ENCODE measurements at regions of chr5 and their contacts with region 1.

Region 1: GRCh38 chr5:135944967-135945560 is 9.7 kb downstream of the LECT2 start:
- DNase-seq: peak; percentile 73
- H3K4me3 ChIP-seq: no peak overlapping the region
- H3K27ac ChIP-seq: no peak overlapping the region
- H3K4me1 ChIP-seq: no peaks in the 10 kb centered on the region
- H3K27me3 ChIP-seq: no peaks in the 10 kb centered on the region
- CTCF ChIP-seq: peak; percentile 58 to 82 (median 80)
- POLR2A ChIP-seq: no peak

Region 2: GRCh38 chr5:135851186-135851914 is 93.7 kb before region 1 on chr5:
- intact Hi-C with region 1: no loop called
- DNase-seq: no peak
- H3K4me3 ChIP-seq: no peak overlapping the region
- H3K27ac ChIP-seq: no peak overlapping the region
- H3K4me1 ChIP-seq: no peaks in the 10 kb centered on the region
- H3K27me3 ChIP-seq: no peaks in the 10 kb centered on the region
- CTCF ChIP-seq: no peak
- POLR2A ChIP-seq: no peak

Region 3: DNA sequence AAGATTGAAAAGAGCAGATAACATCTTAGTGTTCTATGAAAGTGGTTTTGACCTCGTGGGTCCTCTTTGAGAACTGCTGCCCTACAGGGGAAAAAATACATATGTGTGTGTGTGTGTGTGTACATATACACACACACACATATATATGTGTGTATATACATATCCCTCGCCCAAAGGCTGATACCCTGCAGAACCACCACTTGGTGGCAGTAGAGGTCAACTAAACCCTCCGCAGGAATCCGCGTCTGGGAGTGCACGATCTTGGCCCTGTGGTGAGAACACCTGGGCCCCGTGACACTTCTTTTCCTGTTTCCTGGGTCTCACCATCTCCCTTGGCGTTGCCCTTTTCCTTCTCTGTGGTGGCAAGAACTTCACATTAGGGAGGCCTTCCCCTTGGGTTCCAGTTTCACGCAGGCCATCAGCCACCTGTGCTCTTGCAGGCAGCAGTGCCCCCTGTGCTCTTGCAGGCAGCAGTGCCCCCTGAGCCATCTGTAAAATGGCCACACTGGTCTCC is 57.7 kb before region 1 on chr5:
- intact Hi-C with region 1: loop called (anchors 5 kb)
- DNase-seq: peak; percentile 63
- H3K4me3 ChIP-seq: no peak overlapping the region
- H3K27ac ChIP-seq: no peak overlapping the region
- H3K4me1 ChIP-seq: no peaks in the 10 kb centered on the region
- H3K27me3 ChIP-seq: no peaks in the 10 kb centered on the region
- CTCF ChIP-seq: peak; percentile 57 to 84 (median 77)
- POLR2A ChIP-seq: no peak

Region 4: DNA sequence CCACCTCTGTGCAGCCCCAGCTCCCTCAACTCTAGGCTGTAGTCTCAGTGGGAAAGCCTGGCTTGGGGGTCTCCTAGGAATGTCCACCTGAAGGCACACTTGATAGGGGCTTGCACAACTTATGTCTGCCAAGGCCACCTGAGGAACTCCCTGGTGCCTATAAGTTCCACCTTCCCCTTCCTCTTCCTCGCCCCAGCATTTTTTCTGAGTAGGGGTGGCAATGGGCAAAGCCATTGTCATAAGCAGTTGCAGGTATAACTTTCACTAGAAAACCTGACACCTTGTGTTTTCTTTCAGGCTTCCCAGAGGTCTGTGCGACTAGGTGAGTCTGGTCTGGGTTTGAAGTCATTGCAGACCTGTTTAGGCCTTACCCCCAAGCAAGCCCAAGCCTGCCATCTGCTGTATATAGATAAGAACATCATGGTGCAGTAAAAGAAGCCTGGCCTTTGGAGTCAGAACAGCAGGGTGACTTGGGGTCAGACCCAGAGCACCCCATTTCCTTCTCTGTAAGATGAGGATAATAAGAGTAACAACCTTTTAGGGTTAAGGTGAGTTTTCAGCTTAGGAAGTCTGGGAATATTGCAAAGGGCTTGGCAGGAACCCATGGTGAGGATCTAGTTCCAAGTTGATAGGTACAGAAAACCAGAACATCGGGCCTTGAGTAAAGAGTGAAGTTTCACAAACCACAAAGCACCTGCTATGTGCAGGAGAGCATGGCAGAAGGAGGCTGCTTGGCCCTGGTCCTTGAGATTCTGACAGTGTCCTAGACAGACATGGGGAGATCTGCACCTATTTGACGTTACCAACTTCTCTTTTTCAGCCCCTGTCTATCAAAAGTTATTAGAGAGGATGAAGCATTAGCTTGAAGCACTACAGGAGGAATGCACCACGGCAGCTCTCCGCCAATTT is 117.6 kb after region 1 on chr5:
- intact Hi-C with region 1: loop called (anchors 2 kb)
- DNase-seq: no peak
- H3K4me3 ChIP-seq: no peak overlapping the region
- H3K27ac ChIP-seq: no peak overlapping the region
- H3K4me1 ChIP-seq: no peaks in the 10 kb centered on the region
- H3K27me3 ChIP-seq: no peaks in the 10 kb centered on the region
- CTCF ChIP-seq: peak in 2 of 4 experiments; percentile 41 to 62
- POLR2A ChIP-seq: no peak

Region 5: GRCh38 chr5:136080483-136081216 is 135.6 kb after region 1 on chr5:
- intact Hi-C with region 1: loop called (anchors 1 kb)
- DNase-seq: peak; percentile 46
- H3K4me3 ChIP-seq: peak overlapping the region; percentile 5 to 11
- H3K27ac ChIP-seq: peak overlapping the region in 1 of 2 donors; percentile 40
- H3K4me1 ChIP-seq: no peaks in the 10 kb centered on the region
- H3K27me3 ChIP-seq: no peaks in the 10 kb centered on the region
- CTCF ChIP-seq: no peak
- POLR2A ChIP-seq: no peak

Region 6: DNA sequence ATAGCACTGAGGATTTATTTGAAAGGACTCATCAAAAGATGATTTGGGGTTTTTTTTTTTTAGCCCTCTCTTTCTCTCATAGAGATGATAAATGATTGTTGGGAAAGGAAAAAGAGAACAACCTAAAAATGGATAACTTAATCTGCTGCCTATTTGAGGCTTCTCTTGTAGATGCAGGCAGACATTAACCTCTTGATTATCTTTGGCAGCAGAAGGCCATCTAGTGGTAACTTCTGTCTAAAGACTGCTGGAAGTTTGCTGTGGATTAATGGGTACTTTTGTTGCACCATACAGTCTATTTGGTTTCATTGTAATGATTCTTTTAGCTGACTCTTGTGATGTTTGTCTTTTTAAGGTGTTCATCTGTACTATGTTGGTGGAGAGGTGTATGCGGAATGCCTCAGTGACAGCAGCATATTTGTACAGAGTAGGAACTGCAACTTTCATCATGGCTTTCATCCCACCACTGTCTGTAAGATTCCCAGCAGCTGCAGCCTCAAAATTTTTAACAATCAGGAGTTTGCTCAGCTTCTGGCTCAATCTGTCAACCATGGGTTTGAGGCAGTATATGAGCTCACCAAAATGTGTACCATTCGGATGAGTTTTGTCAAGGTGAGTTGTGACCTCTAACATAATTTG is 229.1 kb after region 1 on chr5:
- intact Hi-C with region 1: loop called (anchors 5 kb)
- DNase-seq: no peak
- H3K4me3 ChIP-seq: no peak overlapping the region
- H3K27ac ChIP-seq: no peak overlapping the region
- H3K4me1 ChIP-seq: no peaks in the 10 kb centered on the region
- H3K27me3 ChIP-seq: no peaks in the 10 kb centered on the region
- CTCF ChIP-seq: peak in 3 of 4 experiments; percentile 37 to 71 (median 65)
- POLR2A ChIP-seq: no peak

Region 7: GRCh38 chr5:136466041-136466415 is 521.0 kb after region 1 on chr5:
- intact Hi-C with region 1: no loop called
- DNase-seq: no peak
- H3K4me3 ChIP-seq: no peak overlapping the region
- H3K27ac ChIP-seq: no peak overlapping the region
- H3K4me1 ChIP-seq: no peaks in the 10 kb centered on the region
- H3K27me3 ChIP-seq: no peaks in the 10 kb centered on the region
- CTCF ChIP-seq: no peak
- POLR2A ChIP-seq: no peak